ENCODE measurements at regions of chr1 and their contacts with region 1.

Region 1: GRCh38 chr1:214213136-214213535 is 67.8 kb upstream of the SMYD2 start:
- DNase-seq: peak; percentile 82
- H3K4me3 Mint-ChIP-seq: peak overlapping the region; percentile 15
- H3K27ac Mint-ChIP-seq: peak overlapping the region; percentile 7
- H3K4me1 Mint-ChIP-seq: peaks cover 20% of the 10 kb centered on the region
- H3K27me3 Mint-ChIP-seq: no peaks in the 10 kb centered on the region
- CTCF ChIP-seq: peak; percentile 25

Region 2: DNA sequence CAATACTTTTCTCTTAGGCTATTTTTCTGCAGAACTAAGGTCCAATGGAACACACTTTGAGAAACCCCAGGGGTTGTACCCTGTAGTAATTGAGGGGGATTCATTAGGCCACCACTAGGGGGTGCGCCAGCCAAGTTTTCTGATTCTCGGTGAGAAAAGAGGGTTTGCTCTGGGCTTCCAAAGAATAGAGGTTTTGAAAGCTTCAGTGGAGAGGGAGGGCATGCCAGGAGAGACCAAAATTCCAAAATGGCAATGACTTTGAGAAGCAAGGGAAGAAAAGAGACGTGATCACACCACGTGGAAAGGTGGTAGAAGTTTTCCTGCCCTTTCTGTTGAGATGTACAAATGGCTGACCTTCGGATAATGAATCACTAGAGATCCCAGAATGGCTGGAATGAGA is 838.8 kb before region 1 on chr1:
- CTCF ChIA-PET with region 1: interaction called, 3 read pairs
- POLR2A ChIA-PET with region 1: no interaction called
- intact Hi-C with region 1: loop called (anchors 1 kb)
- DNase-seq: peak; percentile 90
- H3K4me3 Mint-ChIP-seq: no peak overlapping the region
- H3K27ac Mint-ChIP-seq: no peak overlapping the region
- H3K4me1 Mint-ChIP-seq: peaks cover 4% of the 10 kb centered on the region
- H3K27me3 Mint-ChIP-seq: no peaks in the 10 kb centered on the region
- CTCF ChIP-seq: peak; percentile 99

Region 3: GRCh38 chr1:214107322-214108096 is 105.6 kb before region 1 on chr1:
- CTCF ChIA-PET with region 1: no interaction called
- POLR2A ChIA-PET with region 1: no interaction called
- intact Hi-C with region 1: no loop called
- DNase-seq: no peak
- H3K4me3 Mint-ChIP-seq: no peak overlapping the region
- H3K27ac Mint-ChIP-seq: no peak overlapping the region
- H3K4me1 Mint-ChIP-seq: peaks cover 5% of the 10 kb centered on the region
- H3K27me3 Mint-ChIP-seq: no peaks in the 10 kb centered on the region
- CTCF ChIP-seq: no peak

Region 4: DNA sequence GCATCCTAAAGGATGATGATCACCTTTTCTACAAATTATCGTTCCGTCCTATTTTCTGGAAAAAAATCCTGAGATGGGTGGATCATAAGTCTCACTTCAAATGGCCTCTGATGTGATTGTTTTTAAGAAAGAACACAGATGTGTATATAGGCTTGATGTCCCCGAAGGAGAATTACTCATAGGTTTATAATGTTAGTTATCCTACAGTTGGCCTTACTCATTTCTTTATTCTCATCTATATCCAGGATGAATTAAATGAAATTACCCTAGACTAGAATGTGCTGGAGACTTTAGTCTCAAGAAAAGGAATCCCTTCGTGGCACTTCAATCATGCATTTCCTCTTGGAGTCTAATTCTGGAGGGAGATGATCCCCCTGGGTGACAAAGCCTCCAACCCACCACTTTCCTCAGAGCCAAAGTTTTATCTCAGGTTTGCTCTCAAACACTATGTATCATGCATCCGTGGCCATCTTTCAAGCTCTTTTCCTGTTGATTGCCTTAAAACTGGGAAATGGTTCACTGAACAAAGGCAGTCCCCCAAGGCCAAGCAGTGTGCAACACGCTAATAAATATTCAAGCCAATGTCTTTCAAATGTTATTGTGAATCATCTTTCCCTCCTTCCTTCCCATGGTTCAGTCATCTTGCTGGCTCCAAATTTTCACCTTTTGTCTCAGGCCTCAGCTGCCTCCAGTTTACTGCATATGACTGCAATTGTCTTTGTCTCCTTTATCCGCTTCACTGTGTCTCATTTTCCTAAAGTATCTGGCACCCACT is 35.4 kb after region 1 on chr1:
- CTCF ChIA-PET with region 1: interaction called, 17 read pairs
- POLR2A ChIA-PET with region 1: no interaction called
- intact Hi-C with region 1: no loop called
- DNase-seq: no peak
- H3K4me3 Mint-ChIP-seq: no peak overlapping the region
- H3K27ac Mint-ChIP-seq: no peak overlapping the region
- H3K4me1 Mint-ChIP-seq: peaks cover 6% of the 10 kb centered on the region
- H3K27me3 Mint-ChIP-seq: peaks cover 48% of the 10 kb centered on the region
- CTCF ChIP-seq: no peak

Region 5: GRCh38 chr1:214303141-214303930 is 90.2 kb after region 1 on chr1:
- CTCF ChIA-PET with region 1: interaction called, 13 read pairs
- POLR2A ChIA-PET with region 1: interaction called, 3 read pairs
- intact Hi-C with region 1: no loop called
- DNase-seq: no peak
- H3K4me3 Mint-ChIP-seq: no peak overlapping the region
- H3K27ac Mint-ChIP-seq: no peak overlapping the region
- H3K4me1 Mint-ChIP-seq: no peaks in the 10 kb centered on the region
- H3K27me3 Mint-ChIP-seq: no peaks in the 10 kb centered on the region
- CTCF ChIP-seq: no peak

Region 6: DNA sequence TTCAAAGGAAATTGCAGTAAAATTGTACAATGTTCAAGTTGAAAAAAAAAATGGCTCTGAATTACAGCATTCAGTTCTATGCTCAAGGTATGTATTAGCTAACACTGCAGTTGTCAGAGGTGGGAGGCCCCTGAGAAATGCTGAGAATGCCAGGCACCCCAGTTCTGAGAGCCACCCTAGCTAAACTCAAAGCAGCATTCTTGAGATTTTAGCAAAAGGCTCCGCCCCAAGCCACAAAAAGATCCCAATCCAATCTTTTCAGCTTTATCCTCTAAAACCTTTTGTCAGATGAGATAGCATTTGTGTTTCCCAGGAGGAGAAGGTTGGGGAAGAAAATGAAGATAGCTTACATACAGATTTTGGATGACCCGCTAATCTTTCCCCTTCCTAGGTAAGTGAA is 136.6 kb after region 1 on chr1:
- CTCF ChIA-PET with region 1: interaction called, 10 read pairs
- POLR2A ChIA-PET with region 1: interaction called, 4 read pairs
- intact Hi-C with region 1: no loop called
- DNase-seq: no peak
- H3K4me3 Mint-ChIP-seq: no peak overlapping the region
- H3K27ac Mint-ChIP-seq: peak overlapping the region; percentile 23
- H3K4me1 Mint-ChIP-seq: no peaks in the 10 kb centered on the region
- H3K27me3 Mint-ChIP-seq: no peaks in the 10 kb centered on the region
- CTCF ChIP-seq: no peak

Region 7: GRCh38 chr1:214427871-214428277 is 214.7 kb after region 1 on chr1:
- CTCF ChIA-PET with region 1: no interaction called
- POLR2A ChIA-PET with region 1: no interaction called
- intact Hi-C with region 1: no loop called
- DNase-seq: peak; percentile 97
- H3K4me3 Mint-ChIP-seq: peak overlapping the region; percentile 15
- H3K27ac Mint-ChIP-seq: peak overlapping the region; percentile 82
- H3K4me1 Mint-ChIP-seq: peaks cover 63% of the 10 kb centered on the region
- H3K27me3 Mint-ChIP-seq: no peaks in the 10 kb centered on the region
- CTCF ChIP-seq: no peak

Region 8: DNA sequence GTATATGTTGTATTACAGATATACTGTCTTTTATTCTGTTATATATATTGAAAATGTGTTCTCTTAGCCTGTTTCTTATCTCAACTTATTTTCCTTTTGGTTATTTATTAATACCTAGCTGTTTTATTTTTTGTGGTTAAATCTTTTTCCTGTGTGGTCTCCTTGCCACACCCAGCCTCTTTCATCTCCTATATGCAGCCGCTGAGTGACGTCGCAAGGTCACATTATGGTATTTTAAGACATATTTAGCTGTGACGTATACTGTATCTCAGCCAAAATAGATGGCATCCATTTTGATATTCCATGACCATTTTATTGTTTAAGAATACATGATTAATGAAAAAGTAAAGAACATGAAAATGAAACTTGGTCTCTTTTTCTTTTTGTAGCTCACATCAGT is 419.0 kb after region 1 on chr1:
- CTCF ChIA-PET with region 1: interaction called, 52 read pairs
- POLR2A ChIA-PET with region 1: no interaction called
- intact Hi-C with region 1: loop called (anchors 1 kb)
- DNase-seq: no peak
- H3K4me3 Mint-ChIP-seq: no peak overlapping the region
- H3K27ac Mint-ChIP-seq: peak overlapping the region; percentile 66
- H3K4me1 Mint-ChIP-seq: peaks cover 4% of the 10 kb centered on the region
- H3K27me3 Mint-ChIP-seq: no peaks in the 10 kb centered on the region
- CTCF ChIP-seq: no peak